BJ (cell line): ENCODE measurements at regions of chr11 and their contacts with region 1.

Region 1: DNA sequence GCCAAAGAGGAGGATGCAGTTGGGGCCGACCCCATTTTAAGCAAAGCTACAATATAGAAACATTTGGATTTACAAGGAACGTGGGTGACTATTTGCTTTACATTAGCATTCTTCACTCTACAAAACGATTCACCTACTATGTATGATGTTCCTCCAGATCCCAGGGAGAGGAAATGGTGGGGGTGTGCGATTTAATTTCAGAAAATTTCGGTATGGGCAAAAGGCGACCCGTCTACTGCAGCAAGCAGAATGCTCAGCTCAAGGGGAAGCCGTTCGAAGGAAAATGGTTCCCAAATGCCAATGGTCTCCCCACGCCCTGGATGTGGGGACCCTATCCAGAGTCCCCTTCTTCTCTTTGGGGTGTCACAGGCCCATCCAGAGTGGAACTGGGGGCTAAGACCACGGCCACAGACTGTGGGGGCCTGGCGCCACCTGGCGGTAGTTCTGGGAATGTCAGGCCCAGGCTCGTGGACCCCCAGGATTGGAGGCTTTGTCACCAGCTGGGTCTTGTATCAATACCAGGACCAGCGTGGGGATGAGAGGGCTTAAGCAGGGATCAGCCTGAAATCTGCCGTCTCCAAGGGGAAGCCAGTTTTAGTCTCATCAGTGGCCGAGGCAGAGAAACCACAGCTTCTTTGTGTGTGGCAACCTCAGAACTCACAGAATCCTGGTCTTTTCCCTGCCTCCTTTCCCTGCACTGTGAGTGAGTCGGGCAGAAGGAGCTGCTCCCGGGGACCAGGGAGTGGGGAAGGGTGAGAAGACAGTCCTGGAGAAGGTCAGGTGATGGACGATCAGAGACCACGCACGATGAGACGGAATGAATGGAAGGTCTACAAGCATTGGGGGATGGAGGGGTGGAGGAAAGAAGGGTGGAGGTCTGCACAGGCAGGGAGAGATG is 8.4 kb downstream of the LRRC10B start:
- DNase-seq: no peak
- H3K4me3 ChIP-seq: peak overlapping the region; percentile 5; the same call in 1 of the 2 replicates
- H3K27me3 ChIP-seq: peaks cover 7% of the 10 kb centered on the region; the same call in 1 of the 2 replicates
- CTCF ChIP-seq: peak; percentile 99

Region 2: GRCh38 chr11:61429691-61430582 is 87.0 kb before region 1 on chr11 and contains the starts of genes CPSF7 and SDHAF2:
- CTCF ChIA-PET with region 1: interaction called, 12 read pairs
- POLR2A ChIA-PET with region 1: no interaction called
- DNase-seq: peak; percentile 52
- H3K4me3 ChIP-seq: peak within 1 kb of the TSS; percentile 75
- H3K27me3 ChIP-seq: no peaks in the 10 kb centered on the region
- CTCF ChIP-seq: no peak
- polyA plus RNA-seq, gene CPSF7: 35.4 and 36.2 TPM in 2 replicates
- polyA plus RNA-seq, gene SDHAF2: 67.7 and 81.1 TPM in 2 replicates

Region 3: DNA sequence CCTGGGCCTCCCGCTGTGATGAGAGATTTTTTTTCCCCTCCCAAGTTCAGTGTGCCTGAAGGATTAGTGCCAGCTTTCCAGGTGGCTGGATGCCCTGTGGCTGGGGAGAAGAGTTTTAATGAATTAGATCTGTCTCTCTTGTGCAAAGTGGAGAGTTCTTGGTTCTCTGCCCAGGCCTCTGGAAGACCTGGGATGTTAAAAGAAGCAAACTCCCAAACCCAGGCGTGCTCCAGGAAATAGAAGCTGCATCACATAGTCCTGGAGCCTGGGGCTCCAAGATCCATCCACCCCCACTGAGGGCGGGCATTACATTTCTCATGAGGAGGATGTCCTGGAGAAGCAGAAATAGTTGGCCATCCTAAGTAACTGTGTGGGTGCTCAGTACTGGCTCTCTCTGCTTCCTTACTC is 56.4 kb before region 1 on chr11:
- CTCF ChIA-PET with region 1: interaction called, 15 read pairs
- POLR2A ChIA-PET with region 1: no interaction called
- DNase-seq: no peak
- H3K4me3 ChIP-seq: no peak overlapping the region
- H3K27me3 ChIP-seq: no peaks in the 10 kb centered on the region
- CTCF ChIP-seq: no peak

Region 4: GRCh38 chr11:61495801-61496597 is 20.9 kb before region 1 on chr11:
- CTCF ChIA-PET with region 1: interaction called, 38 read pairs
- POLR2A ChIA-PET with region 1: no interaction called
- DNase-seq: no peak
- H3K4me3 ChIP-seq: no peak overlapping the region
- H3K27me3 ChIP-seq: peaks cover 1% of the 10 kb centered on the region
- CTCF ChIP-seq: no peak

Region 5: DNA sequence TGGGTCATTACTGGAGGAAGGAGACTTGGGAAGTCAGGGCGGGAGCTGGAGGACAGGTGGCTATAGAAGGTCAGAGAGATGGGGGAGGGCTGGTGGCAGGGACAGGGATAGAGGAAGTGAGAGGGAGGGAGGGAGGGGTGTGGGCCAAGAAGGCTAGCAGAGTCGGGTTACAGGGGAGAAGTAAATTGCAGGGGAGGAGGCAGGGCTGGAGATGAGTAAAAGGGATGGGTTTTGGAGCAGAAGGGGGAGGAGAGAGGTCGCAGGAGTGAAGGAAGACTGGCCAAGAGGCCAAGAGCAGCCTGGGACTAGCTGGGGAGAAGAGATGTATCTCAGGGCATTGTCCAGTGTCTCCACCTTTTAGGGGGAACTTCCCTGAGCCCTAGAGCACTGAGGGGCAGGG is 24.7 kb after region 1 on chr11:
- CTCF ChIA-PET with region 1: interaction called, 27 read pairs
- POLR2A ChIA-PET with region 1: no interaction called
- DNase-seq: no peak
- H3K4me3 ChIP-seq: no peak overlapping the region
- H3K27me3 ChIP-seq: peaks cover 5% of the 10 kb centered on the region
- CTCF ChIP-seq: no peak

Region 6: GRCh38 chr11:61581030-61581928 is 64.4 kb after region 1 on chr11 and contains the start of gene SYT7:
- CTCF ChIA-PET with region 1: interaction called, 13 read pairs
- POLR2A ChIA-PET with region 1: no interaction called
- DNase-seq: peak; percentile 47
- H3K4me3 ChIP-seq: peak within 1 kb of the TSS; percentile 41
- H3K27me3 ChIP-seq: peaks cover 39% of the 10 kb centered on the region
- CTCF ChIP-seq: no peak; the same call in 1 of the 2 replicates
- polyA plus RNA-seq, gene SYT7: 0.01 and 0.04 TPM in 2 replicates

Region 7: DNA sequence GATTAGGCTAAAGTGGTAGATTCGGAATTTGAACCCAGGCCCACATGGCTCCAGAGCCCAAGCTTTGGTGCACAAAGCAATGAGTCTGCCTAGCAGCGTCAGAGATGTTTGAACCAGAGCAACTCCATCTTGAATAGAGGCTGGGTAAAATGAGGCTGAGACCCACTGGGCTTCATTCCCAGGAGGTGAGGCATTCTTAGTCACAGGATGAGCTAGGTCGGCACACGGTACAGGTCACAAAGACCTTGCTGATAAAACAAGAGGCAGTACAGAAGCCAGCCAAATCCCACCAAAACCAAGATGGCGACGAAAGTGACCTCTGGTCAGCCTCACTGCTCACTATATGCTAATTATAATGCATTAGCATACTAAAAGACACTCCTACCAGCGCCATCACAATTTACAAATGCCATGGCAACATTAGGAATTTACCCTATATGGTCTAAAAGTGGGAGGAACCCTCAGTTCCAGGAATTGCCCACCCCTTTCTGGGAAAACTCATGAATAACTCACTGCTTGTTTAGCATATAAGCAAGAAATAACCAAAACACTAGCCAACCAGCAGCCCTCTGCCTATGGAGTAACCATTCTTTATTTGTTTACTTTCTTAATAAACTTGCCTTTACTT is 123.0 kb after region 1 on chr11:
- CTCF ChIA-PET with region 1: interaction called, 28 read pairs
- POLR2A ChIA-PET with region 1: no interaction called
- DNase-seq: no peak
- H3K4me3 ChIP-seq: no peak overlapping the region
- H3K27me3 ChIP-seq: peaks cover 5% of the 10 kb centered on the region; the same call in 1 of the 2 replicates
- CTCF ChIP-seq: no peak

Region 8: GRCh38 chr11:61841636-61842527 is 325.0 kb after region 1 on chr11:
- CTCF ChIA-PET with region 1: no interaction called
- POLR2A ChIA-PET with region 1: no interaction called
- DNase-seq: no peak
- H3K4me3 ChIP-seq: no peak overlapping the region
- H3K27me3 ChIP-seq: no peaks in the 10 kb centered on the region
- CTCF ChIP-seq: no peak

Region 9: DNA sequence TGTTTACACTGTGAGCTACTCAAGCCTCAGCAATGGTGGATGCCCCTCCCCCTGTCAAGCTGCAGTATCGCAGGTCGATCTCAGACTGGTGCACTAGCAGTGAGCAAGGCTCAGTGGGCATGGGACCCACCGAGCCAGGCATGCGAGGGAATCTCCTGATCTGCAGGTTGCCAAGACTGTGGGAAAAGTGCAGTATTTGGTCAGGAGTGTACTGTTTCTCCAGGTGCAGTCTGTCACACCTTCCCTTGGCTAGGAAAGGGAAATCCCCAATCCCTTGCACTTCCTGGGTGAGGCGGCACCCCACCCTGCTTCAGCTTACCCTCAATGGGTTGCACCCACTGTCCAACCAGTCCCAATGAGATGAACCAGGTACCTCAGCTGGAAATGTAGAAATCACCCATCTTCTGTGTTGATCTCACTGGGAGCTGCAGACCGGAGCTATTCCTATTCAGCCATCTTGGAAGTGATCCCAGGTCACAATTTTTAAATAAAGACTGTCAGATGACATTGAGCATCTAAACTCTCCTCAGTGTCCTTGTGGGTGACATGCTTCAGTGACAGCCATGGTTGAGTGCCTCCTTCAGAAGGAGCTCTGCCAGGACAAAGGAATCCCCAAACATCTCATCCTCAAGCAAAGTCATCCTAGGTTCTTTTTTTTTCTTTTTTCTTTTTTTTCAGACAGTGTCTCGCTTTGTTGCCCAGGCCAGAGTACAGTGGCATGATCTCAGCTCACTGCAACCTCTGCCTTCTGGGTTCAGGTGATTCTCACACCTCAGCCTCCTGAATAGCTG is 1616.3 kb after region 1 on chr11:
- CTCF ChIA-PET with region 1: no interaction called
- POLR2A ChIA-PET with region 1: no interaction called
- DNase-seq: no peak
- H3K4me3 ChIP-seq: no peak overlapping the region
- H3K27me3 ChIP-seq: no peaks in the 10 kb centered on the region
- CTCF ChIP-seq: no peak

Region 10: DNA sequence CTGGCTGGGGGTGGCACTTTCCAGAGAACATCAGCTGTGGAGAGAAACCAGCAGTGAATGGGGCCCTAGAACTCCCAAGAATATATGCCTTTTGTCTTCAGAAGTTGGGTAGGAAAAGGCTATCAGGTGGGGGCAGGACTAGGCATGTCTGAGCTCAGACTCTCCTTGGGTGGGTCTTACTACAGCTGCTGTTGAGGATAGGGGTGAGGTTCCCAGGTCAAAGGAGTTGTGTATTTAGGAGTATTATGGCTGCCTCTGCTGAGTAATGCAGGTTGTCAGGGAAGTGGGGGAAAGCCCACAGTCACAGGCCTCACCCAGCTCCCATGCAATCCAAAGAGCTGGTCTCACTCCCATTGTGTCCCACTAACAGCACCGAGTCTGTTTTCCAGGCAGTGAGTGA is 1878.8 kb after region 1 on chr11:
- CTCF ChIA-PET with region 1: no interaction called
- POLR2A ChIA-PET with region 1: no interaction called
- DNase-seq: no peak
- H3K4me3 ChIP-seq: no peak overlapping the region
- H3K27me3 ChIP-seq: no peaks in the 10 kb centered on the region
- CTCF ChIP-seq: no peak